Activated T-helper 1 cell treated with anti-CD3 and anti-CD28 coated beads, Interleukin-12 subunit alpha, Interleukin-12 subunit beta, Interleukin-2, Interleukin-4 antibody, amounts not matched to agents 30 ng/mL and 10 ng/mL and 1 ng/mL, durations not matched to agents 14 hours and 24 hours and 36 hours (primary cell): ENCODE measurements at regions of chr2 and their contacts with region 1.

Region 1: DNA sequence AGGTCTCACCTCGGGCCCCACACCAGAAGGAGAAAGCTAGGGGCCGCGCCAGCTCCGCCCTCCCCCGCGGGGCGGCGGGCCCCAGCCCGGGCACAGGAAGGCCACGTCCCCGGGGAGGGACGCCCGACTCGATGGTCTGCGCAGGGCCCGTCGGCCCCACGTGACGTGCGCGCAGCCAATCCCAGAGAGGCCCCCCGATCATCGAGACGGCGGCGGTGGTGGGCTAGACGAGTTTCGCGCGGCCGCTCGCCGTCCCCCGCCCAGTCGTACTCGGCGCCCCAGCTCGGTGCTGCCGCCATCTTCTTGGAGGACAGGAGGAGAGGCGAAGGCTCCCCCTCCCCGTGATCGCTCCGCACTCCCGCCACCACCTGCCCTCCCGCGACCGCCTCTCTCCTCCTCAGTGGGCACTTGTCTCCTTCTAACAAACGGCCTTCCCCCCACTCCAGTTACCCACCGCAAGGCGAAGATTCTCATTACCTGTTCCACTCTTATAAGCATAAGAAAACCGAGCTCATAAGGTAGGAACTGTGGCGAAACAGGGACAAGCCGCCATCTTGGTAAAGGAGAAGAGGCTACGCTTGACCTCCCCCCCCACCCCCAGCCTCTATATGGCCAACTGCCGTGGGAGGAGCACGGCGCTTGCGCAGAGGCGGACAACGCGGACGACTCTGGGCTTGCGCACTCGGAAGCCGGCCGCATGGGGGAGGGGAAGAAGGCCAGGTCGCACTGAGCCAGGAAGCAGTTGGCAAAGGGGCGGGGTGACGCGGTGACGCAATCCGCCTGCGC is at the start of gene HDLBP:
- DNase-seq: peak; percentile 100
- H3K4me3 Mint-ChIP-seq: peak within 1 kb of the TSS; percentile 100
- H3K27ac Mint-ChIP-seq: peak within 1 kb of the TSS; percentile 100
- H3K4me1 Mint-ChIP-seq: peaks cover 74% of the 10 kb centered on the region
- H3K27me3 Mint-ChIP-seq: peaks cover 2% of the 10 kb centered on the region
- total RNA-seq, gene HDLBP: 270 and 273 TPM in 2 replicates

Region 2: DNA sequence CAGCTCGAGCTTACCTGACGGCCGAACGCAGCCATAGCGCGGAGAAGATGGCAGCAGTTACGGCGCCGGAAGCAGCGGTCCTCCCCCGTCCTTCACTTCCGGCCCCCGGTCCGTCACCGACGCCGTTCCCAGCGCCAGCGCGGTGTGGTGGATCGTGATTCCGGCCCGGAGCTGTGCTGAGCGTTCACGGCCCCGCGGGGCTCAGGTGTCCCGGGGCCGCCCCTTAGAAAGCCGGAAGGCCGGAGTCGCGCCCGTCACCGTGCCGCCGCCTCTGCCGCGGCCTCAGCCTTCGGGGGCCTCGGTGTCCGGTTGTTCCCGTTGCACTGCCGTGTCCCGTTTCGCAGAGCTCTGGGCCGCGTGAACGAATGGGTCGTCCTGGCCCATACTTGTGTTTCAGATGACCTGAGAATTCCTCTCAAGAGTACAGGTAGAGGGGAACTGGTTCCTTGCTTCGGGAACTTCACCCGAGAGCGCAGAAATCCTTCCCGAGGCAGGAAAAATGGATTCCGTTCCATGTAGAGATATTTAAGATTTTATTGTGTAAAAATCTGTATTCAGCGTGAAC is 213.0 kb before region 1 on chr2 and contains the start of gene MTERF4:
- intact Hi-C with region 1: loop called (anchors 2 kb)
- DNase-seq: peak; percentile 86
- H3K4me3 Mint-ChIP-seq: peak within 1 kb of the TSS; percentile 94
- H3K27ac Mint-ChIP-seq: peak within 1 kb of the TSS; percentile 98
- H3K4me1 Mint-ChIP-seq: peaks cover 41% of the 10 kb centered on the region
- H3K27me3 Mint-ChIP-seq: no peaks in the 10 kb centered on the region
- total RNA-seq, gene MTERF4: 40.5 and 43.3 TPM in 2 replicates

Region 3: DNA sequence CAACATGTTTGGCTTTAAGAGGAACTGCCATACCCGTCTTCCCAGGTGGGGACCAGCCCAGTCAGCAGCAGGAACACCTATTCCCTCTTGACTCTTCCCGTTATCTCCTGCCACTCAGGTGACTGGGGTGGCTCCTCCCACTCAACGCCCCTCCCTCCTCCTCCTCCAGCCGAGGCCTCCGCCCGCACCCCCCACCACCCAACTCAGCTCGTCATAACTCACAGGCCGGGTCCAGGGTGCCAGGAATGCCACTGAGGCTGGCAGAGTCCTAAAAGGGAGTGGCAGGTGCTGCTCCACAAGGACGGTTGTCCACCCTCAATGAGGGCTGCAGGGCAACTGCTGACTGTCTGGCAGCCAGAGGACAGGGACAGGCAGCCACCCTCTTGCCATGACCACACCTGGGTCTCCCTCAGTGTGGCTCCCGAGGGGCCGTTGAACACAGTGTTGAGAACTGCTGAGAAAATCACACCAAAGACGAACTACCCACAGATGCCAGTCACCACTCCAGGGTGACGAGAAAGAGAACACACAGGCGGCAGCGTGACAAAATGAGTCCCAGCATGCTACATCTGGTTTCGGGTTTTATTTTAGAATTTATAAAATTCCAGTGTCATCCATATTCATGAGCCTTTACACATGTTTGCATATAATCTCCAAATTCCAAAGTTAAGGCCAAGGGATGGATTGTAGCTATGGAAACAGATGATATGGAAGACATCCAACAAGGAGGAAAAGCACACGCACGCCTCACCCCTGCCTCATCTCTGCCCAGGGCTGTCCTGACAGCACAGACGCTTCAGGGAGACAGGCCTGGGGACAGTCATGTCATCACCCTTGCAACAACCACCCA is 88.3 kb before region 1 on chr2:
- intact Hi-C with region 1: no loop called
- DNase-seq: no peak
- H3K4me3 Mint-ChIP-seq: no peak overlapping the region
- H3K27ac Mint-ChIP-seq: no peak overlapping the region
- H3K4me1 Mint-ChIP-seq: peaks cover 7% of the 10 kb centered on the region
- H3K27me3 Mint-ChIP-seq: no peaks in the 10 kb centered on the region

Region 4: GRCh38 chr2:241339839-241340630 is 24.7 kb after region 1 on chr2:
- intact Hi-C with region 1: loop called (anchors 1 kb)
- DNase-seq: no peak
- H3K4me3 Mint-ChIP-seq: peak overlapping the region; percentile 11
- H3K27ac Mint-ChIP-seq: no peak overlapping the region
- H3K4me1 Mint-ChIP-seq: peaks cover 46% of the 10 kb centered on the region
- H3K27me3 Mint-ChIP-seq: no peaks in the 10 kb centered on the region

Region 5: DNA sequence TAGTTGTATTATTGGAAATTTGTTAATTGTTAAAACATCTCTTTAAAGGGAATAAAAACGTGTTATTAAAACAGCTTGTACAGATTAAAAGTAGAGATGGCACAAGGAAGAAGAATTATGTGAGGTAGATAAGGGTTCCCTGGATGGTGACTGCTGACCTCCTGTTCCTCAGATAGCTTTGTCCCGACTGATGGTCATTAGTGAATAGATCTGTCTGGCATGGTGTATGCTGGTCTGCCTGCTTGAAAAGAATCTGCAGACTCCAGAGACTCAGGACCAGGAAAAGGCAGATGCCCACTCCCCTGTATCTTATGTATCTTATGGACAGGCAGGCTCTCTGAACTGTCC is 35.2 kb after region 1 on chr2:
- intact Hi-C with region 1: no loop called
- DNase-seq: no peak
- H3K4me3 Mint-ChIP-seq: no peak overlapping the region
- H3K27ac Mint-ChIP-seq: no peak overlapping the region
- H3K4me1 Mint-ChIP-seq: no peaks in the 10 kb centered on the region
- H3K27me3 Mint-ChIP-seq: no peaks in the 10 kb centered on the region

Region 6: GRCh38 chr2:241363316-241363879 is 48.1 kb after region 1 on chr2:
- intact Hi-C with region 1: no loop called
- DNase-seq: no peak
- H3K4me3 Mint-ChIP-seq: no peak overlapping the region
- H3K27ac Mint-ChIP-seq: no peak overlapping the region
- H3K4me1 Mint-ChIP-seq: peaks cover 21% of the 10 kb centered on the region
- H3K27me3 Mint-ChIP-seq: peaks cover 1% of the 10 kb centered on the region

Region 7: DNA sequence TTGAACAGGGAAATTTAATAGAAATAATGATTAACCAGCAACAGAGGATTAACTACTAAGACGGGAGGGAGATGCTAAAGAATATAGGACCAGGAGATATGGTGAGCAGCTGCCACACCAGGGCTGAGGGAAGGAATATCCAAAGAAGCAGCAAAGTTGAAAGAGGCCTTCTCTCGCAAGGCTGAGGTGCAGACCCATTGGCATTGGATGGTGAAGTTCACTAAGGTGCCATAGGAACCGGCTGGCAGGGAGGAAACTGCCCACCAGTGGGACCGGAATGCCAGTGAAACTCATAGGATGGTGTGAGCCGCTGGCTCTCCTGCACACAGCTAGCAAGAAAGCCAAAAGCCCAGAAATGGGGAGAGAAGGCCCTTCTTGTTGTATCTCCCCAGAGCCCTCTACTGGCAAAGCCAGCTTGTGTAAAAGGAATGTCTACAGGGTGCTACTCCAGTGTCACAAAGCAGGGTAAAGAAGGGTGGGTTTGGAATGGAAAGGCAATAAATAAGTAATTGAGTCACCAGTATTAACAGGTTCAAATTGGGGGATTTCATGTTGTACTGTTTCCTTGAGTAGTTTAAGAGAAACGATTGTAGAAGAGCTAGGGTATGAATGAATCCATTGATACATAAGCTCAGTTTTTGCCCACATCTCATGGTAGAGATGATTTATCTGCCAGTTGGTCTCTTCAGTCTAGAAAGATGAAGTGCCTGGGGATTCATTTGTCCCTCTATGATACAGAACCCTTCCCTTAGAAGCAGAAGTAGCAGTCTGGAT is 76.8 kb after region 1 on chr2:
- intact Hi-C with region 1: no loop called
- DNase-seq: no peak
- H3K4me3 Mint-ChIP-seq: no peak overlapping the region
- H3K27ac Mint-ChIP-seq: no peak overlapping the region
- H3K4me1 Mint-ChIP-seq: peaks cover 13% of the 10 kb centered on the region
- H3K27me3 Mint-ChIP-seq: no peaks in the 10 kb centered on the region

Region 8: GRCh38 chr2:241508240-241509154 is 193.2 kb after region 1 on chr2 and contains the start of gene STK25:
- intact Hi-C with region 1: loop called (anchors 1 kb)
- DNase-seq: peak; percentile 98
- H3K4me3 Mint-ChIP-seq: peak within 1 kb of the TSS; percentile 83
- H3K27ac Mint-ChIP-seq: peak within 1 kb of the TSS; percentile 81
- H3K4me1 Mint-ChIP-seq: peaks cover 8% of the 10 kb centered on the region
- H3K27me3 Mint-ChIP-seq: peaks cover 6% of the 10 kb centered on the region
- total RNA-seq, gene STK25: 125 and 133 TPM in 2 replicates

Region 9: GRCh38 chr2:241702132-241703031 is 387.1 kb after region 1 on chr2:
- intact Hi-C with region 1: loop called (anchors 1 kb)
- DNase-seq: peak; percentile 82
- H3K4me3 Mint-ChIP-seq: peak overlapping the region; percentile 78
- H3K27ac Mint-ChIP-seq: peak overlapping the region; percentile 53
- H3K4me1 Mint-ChIP-seq: peaks cover 20% of the 10 kb centered on the region
- H3K27me3 Mint-ChIP-seq: no peaks in the 10 kb centered on the region